OCI-LY7 (cell line): ENCODE measurements at regions of chr4 and their contacts with region 1.

Region 1: DNA sequence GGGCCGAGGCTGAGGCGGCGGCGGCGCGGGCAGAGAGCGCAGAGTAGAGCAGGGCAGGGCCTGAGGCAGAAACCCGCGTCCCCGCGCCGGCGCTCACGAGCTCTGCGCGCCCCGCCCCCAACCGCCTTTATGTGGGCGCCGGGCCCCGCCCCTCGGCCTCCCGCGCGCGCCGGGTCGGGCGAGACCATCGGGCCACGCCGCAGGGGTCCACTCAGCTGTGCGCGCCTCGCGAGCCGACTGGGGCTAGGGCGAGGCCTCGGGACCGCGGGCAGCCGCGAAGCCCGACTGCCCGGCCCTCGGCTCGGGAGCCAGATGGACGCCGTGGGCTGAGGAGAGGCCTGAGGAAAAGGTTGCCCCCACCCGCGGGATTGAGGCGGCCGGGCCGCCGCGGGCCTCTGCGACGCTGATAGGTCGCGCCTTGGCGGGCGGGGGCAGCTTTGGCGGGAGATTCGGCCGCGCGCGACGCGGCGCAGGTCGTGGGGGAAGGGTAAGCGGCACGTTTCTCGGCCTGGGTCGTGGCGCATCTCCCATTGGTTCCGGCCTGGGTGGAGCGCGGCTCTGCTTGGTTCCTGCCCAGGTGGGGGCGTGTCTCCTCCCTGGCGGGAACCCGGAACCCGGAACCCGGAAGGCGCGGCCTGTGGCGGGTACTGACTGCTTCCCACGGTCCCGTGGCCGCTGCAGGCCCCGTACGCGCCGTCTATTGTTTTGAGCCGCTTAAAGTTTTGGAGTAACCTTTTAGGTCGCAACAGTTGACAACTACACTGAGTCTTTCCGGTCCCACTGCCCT is at the start of gene SLBP:
- DNase-seq: peak; percentile 98
- H3K4me3 ChIP-seq: peak within 1 kb of the TSS; percentile 86
- H3K27ac ChIP-seq: peak within 1 kb of the TSS; percentile 85
- H3K4me1 ChIP-seq: peaks cover 62% of the 10 kb centered on the region
- CTCF ChIP-seq: no peak
- total RNA-seq, gene SLBP: 191 and 196 TPM in 2 replicates

Region 2: DNA sequence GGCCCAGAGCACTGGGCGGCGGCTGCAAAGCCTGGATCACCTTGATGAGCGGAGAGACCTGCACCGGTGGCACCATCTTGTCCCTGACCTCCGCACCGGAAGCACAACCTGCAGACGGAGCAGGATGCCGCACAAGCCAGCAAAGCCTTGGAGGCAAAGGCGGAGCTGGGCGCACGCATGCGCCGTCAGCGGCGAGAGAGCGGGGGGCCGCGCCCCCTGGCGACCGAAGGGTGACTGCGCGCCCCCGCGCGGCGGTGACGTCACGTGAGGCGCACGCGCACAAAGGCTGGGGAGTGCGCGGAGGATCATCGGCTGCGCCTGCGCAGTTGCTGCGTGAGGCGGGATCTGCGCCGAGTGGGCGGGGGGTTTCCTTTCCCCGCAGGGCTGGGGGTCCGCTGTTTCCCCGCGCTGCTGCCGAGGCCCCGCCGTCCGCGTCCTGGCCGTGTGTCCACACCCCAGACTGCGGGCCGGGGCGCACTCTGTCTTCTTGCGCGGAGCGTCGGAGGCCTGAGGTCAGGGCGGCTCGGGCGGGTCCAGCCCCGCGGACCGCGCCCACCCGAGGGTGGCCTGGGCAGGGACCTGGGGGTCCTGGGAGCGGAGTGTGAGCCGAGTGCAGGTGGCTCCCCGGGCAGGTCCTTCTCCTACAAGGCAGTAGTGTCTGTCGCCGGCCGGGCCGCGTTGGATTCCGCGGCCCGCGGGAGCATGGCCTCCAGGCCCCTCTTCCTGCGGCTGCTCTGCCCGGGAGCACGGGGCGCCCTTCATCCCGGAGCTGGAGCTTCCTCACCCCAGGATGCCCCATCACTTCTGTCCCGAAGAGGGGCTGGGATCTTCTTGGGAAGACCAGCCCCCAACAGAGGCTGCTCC is 1038.0 kb before region 1 on chr4 and contains the starts of genes ATP5ME and MYL5:
- CTCF ChIA-PET with region 1: no interaction called
- POLR2A ChIA-PET with region 1: no interaction called
- intact Hi-C with region 1: loop called (anchors 10 kb)
- DNase-seq: peak; percentile 98
- H3K4me3 ChIP-seq: peak within 1 kb of the TSS; percentile 98
- H3K27ac ChIP-seq: peak within 1 kb of the TSS; percentile 94
- H3K4me1 ChIP-seq: peaks cover 46% of the 10 kb centered on the region
- CTCF ChIP-seq: peak; percentile 85
- total RNA-seq, gene ATP5ME: 388 and 420 TPM in 2 replicates
- total RNA-seq, gene MYL5: 23.0 and 24.4 TPM in 2 replicates

Region 3: GRCh38 chr4:1579901-1580691 is 132.3 kb before region 1 on chr4:
- CTCF ChIA-PET with region 1: no interaction called
- POLR2A ChIA-PET with region 1: no interaction called
- intact Hi-C with region 1: loop called (anchors 5 kb)
- DNase-seq: peak; percentile 91
- H3K4me3 ChIP-seq: peak overlapping the region; percentile 75
- H3K27ac ChIP-seq: peak overlapping the region; percentile 52
- H3K4me1 ChIP-seq: peaks cover 4% of the 10 kb centered on the region
- CTCF ChIP-seq: no peak

Region 4: DNA sequence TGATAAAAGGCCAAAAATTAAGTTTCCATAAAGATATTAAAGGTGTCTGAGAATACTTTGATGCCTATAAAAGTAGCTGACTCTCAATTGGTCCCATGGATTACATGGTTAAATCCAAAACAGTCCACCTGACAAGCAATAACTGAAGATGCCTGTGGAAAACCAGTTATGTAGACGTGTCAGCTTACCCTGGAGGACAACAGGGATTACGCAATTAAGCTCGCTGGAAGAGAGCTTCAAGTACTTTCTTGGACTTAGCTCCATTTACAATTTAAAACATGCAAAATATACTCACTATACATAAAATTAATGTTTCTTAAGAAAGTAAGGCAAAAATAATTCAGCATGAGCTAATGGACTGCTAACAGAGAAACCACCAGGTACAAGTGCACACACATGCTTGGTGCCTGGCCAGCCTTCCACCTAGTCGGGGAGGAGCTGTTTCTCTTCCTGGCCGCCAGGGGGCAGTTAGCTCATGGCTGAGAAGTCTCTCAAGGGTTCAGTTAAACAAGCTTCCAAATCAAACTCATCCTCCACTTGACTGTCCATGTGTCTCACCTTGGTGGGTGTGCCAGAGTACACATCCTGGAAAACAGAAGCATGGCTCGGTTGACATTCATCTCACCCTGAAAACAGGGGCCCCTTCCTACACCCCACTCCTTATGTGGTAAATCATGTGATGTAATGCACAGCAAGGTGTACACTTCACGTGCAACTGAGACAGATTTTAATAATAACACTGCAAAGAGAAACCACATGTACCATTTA is 19.1 kb before region 1 on chr4:
- CTCF ChIA-PET with region 1: interaction called, 5 read pairs
- POLR2A ChIA-PET with region 1: interaction called, 7 read pairs
- intact Hi-C with region 1: loop called (anchors 1 kb)
- DNase-seq: peak; percentile 85
- H3K4me3 ChIP-seq: no peak overlapping the region
- H3K27ac ChIP-seq: peak overlapping the region; percentile 34
- H3K4me1 ChIP-seq: no peaks in the 10 kb centered on the region
- CTCF ChIP-seq: peak; percentile 100

Region 5: DNA sequence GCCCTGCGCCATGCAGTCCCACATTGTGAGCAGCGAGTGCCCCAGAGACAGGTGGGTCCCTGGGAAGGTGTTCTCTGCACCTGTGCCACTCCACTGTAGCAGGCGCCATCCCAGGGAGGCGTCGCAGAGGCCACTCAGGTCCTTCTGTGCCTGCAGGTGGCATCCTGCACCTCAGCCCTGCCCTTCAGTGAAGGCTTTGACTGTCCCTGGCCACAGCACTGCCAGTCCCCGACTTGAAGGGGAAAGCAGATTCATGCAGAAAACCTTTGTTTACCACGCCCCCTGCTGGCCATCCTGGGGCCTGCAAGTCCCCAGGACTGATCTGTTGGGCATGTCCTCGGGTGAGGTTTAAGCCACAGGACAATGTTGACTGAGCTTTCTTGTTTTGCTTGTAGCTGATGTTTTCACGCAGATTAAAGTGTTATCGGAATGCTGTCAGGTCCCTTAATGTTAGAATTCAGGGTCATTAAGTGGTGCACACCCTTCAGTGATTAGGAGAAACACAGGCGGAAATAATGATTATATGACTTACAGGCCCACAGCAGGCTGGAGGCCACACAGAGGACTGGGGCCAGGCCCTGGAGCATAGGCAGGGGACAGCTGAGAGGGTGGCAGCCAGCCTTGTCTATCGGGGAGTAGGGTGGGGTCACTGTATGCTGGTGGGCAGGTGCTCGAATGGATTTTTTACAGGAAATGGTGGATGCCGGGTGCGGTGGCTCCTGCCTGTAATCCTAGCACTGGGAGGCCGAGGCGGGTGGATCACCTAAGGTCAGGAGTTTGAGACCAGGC is 13.9 kb after region 1 on chr4:
- CTCF ChIA-PET with region 1: interaction called, 3 read pairs
- POLR2A ChIA-PET with region 1: interaction called, 16 read pairs
- intact Hi-C with region 1: loop called (anchors 1 kb)
- DNase-seq: peak; percentile 83
- H3K4me3 ChIP-seq: no peak overlapping the region
- H3K27ac ChIP-seq: no peak overlapping the region
- H3K4me1 ChIP-seq: peaks cover 39% of the 10 kb centered on the region
- CTCF ChIP-seq: peak; percentile 98

Region 6: DNA sequence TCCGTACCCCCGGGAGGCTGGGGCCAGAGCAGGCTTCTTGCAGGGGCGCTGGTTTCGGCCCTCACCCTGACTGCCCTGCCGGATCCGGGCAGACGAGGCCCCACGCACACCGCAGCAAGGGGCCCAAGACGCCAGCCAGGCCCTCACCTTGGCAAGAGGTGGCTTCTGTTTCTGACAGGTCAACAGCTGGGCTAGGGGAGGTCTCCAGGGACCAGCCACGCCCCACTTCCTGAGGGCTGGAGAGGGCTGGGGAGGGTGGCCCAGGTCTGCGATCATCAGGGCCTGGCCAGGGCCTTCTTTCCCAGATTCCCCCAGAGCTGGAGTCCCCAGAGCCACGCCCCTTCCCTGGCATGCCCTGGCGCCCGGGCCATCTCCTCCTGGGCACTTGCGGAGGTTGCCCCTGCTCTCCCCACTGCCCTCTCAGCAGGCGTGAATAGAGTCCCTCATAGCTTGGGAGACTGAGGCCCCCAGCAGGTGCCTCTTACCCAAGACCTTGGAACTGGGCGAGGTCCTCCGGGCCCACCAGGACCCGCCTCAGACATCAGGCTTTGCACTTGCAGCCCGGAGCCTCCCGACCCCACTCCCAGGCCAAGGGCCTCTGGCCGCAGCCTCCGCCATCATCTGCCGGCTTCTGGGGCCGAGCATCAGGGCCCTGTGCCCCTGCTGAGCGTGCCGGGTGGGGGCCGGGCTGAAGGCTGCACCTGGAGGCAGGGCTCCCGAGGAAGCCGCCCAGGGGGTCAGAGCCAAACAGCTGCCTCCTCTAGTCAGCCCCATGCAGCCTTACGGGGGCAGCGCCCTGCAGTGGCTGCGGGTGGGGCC is 74.3 kb after region 1 on chr4:
- CTCF ChIA-PET with region 1: no interaction called
- POLR2A ChIA-PET with region 1: no interaction called
- intact Hi-C with region 1: no loop called
- DNase-seq: no peak
- H3K4me3 ChIP-seq: no peak overlapping the region
- H3K27ac ChIP-seq: no peak overlapping the region
- H3K4me1 ChIP-seq: no peaks in the 10 kb centered on the region
- CTCF ChIP-seq: no peak

Region 7: DNA sequence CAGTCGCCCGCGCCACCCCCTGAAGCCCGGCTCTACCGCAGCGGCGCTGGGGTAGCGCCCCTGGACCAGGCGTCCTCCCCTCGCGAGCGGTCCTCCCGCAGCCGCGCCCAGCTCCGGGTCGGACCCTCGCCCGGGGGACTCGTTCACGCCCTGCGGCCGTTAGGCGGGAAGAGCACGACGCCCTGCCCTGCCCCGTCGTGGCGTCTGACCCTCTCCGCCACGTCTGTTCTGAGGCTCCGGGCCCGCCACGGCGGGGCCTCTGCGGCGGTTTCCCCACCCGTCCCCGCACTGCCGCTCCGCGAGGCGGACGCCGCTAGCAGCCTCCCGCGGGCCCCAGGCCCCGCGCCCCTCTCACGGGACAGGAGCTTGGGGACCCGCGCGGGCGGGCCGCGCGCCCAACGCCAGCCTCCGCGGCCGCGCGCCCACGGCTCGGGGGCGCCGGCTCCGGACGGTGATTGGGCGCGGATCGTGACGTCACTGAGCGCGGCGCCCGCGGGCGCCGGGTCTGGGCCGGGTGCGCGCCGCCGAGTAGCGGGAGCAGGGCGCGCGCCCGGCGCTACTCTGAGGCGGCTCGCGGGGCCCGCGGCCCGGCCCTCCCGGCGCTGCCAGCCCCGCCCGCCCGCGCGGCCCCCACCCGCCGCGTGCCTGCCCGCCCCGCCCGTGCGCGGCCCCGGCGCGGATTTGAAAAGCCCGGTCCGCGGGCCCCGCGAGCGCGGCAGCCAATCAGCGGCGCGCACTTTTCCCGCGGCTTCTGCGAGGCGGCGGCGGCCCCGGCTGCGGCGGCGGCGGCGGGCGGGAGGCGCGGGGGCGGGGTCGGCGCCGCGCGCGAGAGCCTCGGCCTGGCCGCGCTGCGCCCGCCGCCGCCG is 158.4 kb after region 1 on chr4 and contains the start of gene NSD2:
- CTCF ChIA-PET with region 1: no interaction called
- POLR2A ChIA-PET with region 1: no interaction called
- intact Hi-C with region 1: loop called (anchors 2 kb)
- DNase-seq: peak; percentile 94
- H3K4me3 ChIP-seq: peak within 1 kb of the TSS; percentile 94
- H3K27ac ChIP-seq: peak within 1 kb of the TSS; percentile 88
- H3K4me1 ChIP-seq: peaks cover 33% of the 10 kb centered on the region
- CTCF ChIP-seq: no peak
- total RNA-seq, gene NSD2: 158 and 169 TPM in 2 replicates